PC-9 (cell line): ENCODE measurements at regions of chr9 and their contacts with region 1.

Region 1: GRCh38 chr9:120477521-120478001 is 102.4 kb downstream of the CDK5RAP2 start:
- DNase-seq: peak; percentile 43 to 52
- H3K4me3 ChIP-seq: no peak overlapping the region
- H3K27ac ChIP-seq: no peak overlapping the region
- H3K4me1 ChIP-seq: no peaks in the 10 kb centered on the region
- H3K27me3 ChIP-seq: no peaks in the 10 kb centered on the region
- CTCF ChIP-seq: peak; percentile 90

Region 2: GRCh38 chr9:119370816-119371215 is 1106.7 kb before region 1 on chr9:
- CTCF ChIA-PET with region 1: no interaction called
- POLR2A ChIA-PET with region 1: no interaction called
- intact Hi-C with region 1: loop called (anchors 10 kb)
- DNase-seq: peak in 1 of 2 experiments; percentile 11
- H3K4me3 ChIP-seq: no peak overlapping the region
- H3K27ac ChIP-seq: no peak overlapping the region
- H3K4me1 ChIP-seq: no peaks in the 10 kb centered on the region
- H3K27me3 ChIP-seq: no peaks in the 10 kb centered on the region
- CTCF ChIP-seq: no peak

Region 3: DNA sequence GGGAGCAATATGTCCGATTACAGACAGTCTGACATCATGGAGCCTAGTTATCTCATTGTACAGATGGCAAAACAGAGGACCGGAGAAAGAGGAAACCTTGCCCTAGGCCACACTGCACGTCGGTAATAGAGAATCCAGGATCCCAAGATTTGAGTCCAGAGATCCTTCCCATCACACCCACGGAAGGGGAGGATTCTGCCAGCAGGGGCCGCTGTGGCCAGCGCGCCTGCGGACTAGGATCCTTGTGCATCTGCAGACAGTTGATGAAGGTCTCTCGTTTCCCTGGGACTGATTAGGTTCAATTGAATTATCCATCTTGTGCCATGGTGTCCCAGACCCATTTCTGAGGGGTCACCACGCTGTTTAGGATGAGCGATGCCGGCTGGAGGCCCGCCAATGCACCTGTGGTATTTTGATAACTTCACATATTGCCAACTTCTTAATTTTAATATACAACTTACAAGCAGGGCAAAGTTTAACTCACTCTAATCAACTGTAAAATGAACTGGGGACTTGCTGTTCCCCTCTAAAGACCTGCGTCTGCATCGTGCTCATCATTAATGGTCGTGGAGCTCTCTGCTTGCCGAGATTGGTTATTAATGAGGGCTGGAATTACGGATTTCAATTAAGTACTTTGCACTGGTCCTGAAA is 515.7 kb before region 1 on chr9:
- CTCF ChIA-PET with region 1: no interaction called
- POLR2A ChIA-PET with region 1: no interaction called
- intact Hi-C with region 1: loop called (anchors 5 kb)
- DNase-seq: peak in 1 of 2 experiments; percentile 14
- H3K4me3 ChIP-seq: no peak overlapping the region
- H3K27ac ChIP-seq: no peak overlapping the region
- H3K4me1 ChIP-seq: no peaks in the 10 kb centered on the region
- H3K27me3 ChIP-seq: peaks cover 10% of the 10 kb centered on the region
- CTCF ChIP-seq: peak; percentile 52; the same call in 1 of the 2 replicates

Region 4: DNA sequence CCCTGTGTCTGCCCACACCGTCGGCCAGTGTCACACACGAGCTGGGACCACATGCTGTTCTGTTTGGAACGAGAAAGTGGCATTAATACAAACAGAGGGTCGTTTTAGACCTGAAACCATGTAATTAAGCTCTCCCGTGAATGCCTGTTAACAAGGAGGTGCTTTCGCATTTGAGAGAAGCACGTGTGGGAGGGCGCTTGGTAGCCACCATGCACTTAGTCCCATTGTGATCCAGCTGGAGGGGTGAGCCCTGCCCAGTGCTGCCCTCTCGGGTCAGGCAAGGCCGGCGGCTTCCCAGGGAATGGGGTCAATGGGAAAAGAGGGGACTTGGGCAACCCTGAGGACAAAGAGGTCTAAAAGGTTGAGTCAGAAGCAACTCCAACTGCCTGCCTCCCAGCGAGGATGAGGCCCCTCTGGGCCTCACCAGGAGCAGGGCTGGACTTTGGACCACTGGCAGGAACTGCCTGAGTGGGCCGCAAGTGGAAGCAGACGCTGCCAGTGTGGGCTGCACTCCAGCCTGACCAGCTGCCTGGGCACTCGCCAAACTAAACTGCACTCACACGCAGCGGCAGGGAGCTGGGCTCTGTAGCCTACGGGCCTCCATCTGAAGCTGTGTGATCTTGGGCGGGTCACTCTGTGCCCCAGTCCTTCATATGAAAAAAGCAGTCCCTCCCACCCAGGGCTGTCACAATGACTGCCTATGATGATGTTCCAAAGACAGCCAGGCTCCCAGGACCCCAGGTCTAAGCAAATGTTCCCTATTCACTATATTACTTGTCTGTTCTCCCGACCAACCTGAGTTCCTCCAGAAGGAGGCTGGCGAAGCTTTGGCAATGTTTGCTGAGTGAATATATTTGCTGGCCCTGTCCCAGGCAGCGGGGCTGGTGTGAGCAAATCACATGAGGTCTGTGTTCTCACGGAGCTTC is 93.3 kb before region 1 on chr9:
- CTCF ChIA-PET with region 1: no interaction called
- POLR2A ChIA-PET with region 1: no interaction called
- intact Hi-C with region 1: no loop called
- DNase-seq: no peak
- H3K4me3 ChIP-seq: no peak overlapping the region
- H3K27ac ChIP-seq: no peak overlapping the region
- H3K4me1 ChIP-seq: no peaks in the 10 kb centered on the region
- H3K27me3 ChIP-seq: no peaks in the 10 kb centered on the region
- CTCF ChIP-seq: no peak